ENCODE measurements at regions of chr10 and their contacts with region 1.

Region 1: GRCh38 chr10:110803830-110804338 is 67.8 kb upstream of the PDCD4 start:
- DNase-seq: no peak
- H3K4me3 ChIP-seq: no peak overlapping the region
- H3K27ac ChIP-seq: peak overlapping the region in 2 of 4 donors; percentile 69 to 73
- H3K4me1 ChIP-seq: peaks cover 25 to 30% (median 26%) of the 10 kb centered on the region in 4 donors
- H3K27me3 ChIP-seq: no peaks in the 10 kb centered on the region
- CTCF ChIP-seq: peak; percentile 64 to 70 (median 69)
- EP300 ChIP-seq: no peak
- POLR2A ChIP-seq: no peak

Region 2: DNA sequence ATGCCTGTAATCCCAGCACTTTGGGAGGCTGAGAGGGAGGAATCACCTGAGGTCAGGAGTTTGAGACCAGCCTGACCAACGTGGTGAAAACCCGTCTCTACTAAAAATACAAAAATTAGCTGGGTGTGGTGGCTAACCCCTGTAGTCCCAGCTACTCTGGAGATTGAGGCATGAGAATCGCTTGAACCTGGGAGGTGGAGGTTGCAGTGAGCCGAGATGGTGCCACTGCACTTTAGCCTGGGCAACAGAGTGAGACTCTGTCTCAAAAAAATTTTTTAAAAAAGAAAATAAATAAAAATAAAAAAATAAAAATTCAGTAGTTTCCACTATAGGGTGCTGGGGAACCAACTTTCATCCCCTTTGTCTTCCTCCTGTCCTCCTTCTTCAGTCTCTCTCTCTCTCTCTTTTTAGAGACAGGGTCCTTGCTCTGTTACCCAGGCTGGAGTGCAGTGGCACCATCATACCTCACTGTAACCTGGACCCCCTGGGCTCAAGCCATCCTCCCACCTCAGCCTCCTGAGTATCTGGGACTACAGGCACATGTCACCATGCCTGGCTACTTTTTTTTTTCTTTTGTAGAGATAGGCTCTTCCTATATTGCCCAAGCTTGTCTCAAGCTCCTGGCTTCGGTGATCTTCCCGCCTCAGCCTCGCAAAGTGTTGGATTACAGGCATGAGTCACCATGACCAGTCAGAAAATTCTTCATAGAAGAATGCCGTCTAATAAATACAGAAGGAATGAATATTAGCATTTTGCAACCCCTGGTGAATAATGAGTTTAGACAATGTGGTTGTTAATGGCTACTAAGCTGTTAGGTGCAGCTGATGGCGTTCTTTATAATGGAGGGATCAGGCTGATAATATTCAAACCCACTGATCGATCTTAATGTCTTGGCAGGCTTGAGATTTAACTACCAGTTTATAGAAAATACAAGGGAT is 139.1 kb before region 1 on chr10:
- intact Hi-C with region 1: no loop called
- DNase-seq: peak; percentile 64
- H3K4me3 ChIP-seq: no peak overlapping the region
- H3K27ac ChIP-seq: peak overlapping the region in 3 of 4 donors; percentile 36 to 65 (median 49)
- H3K4me1 ChIP-seq: peaks cover 7 to 20% (median 13%) of the 10 kb centered on the region in 4 donors
- H3K27me3 ChIP-seq: no peaks in the 10 kb centered on the region
- CTCF ChIP-seq: no peak
- EP300 ChIP-seq: no peak
- POLR2A ChIP-seq: no peak

Region 3: GRCh38 chr10:110843031-110843430 is 39.1 kb after region 1 on chr10:
- intact Hi-C with region 1: no loop called
- DNase-seq: no peak
- H3K4me3 ChIP-seq: no peak overlapping the region
- H3K27ac ChIP-seq: no peak overlapping the region
- H3K4me1 ChIP-seq: peaks cover 3 to 6% (median 5%) of the 10 kb centered on the region in 4 donors
- H3K27me3 ChIP-seq: no peaks in the 10 kb centered on the region
- CTCF ChIP-seq: no peak
- EP300 ChIP-seq: no peak
- POLR2A ChIP-seq: no peak

Region 4: GRCh38 chr10:110864662-110865140 is 60.8 kb after region 1 on chr10:
- intact Hi-C with region 1: no loop called
- DNase-seq: no peak
- H3K4me3 ChIP-seq: peak overlapping the region in 2 of 4 donors; percentile 11 to 19
- H3K27ac ChIP-seq: peak overlapping the region; percentile 47 to 73 (median 68)
- H3K4me1 ChIP-seq: peaks cover 11 to 34% (median 27%) of the 10 kb centered on the region in 4 donors
- H3K27me3 ChIP-seq: no peaks in the 10 kb centered on the region
- CTCF ChIP-seq: no peak
- EP300 ChIP-seq: no peak
- POLR2A ChIP-seq: no peak

Region 5: GRCh38 chr10:110893559-110894179 is 89.8 kb after region 1 on chr10:
- intact Hi-C with region 1: loop called (anchors 5 kb)
- DNase-seq: no peak
- H3K4me3 ChIP-seq: no peak overlapping the region
- H3K27ac ChIP-seq: peak overlapping the region in 1 of 4 donors; percentile 22
- H3K4me1 ChIP-seq: peaks cover 0 to 37% (median 31%) of the 10 kb centered on the region in 4 donors
- H3K27me3 ChIP-seq: no peaks in the 10 kb centered on the region
- CTCF ChIP-seq: peak; percentile 61 to 72 (median 70)
- EP300 ChIP-seq: no peak
- POLR2A ChIP-seq: no peak

Region 6: GRCh38 chr10:111481261-111481826 is 677.5 kb after region 1 on chr10:
- intact Hi-C with region 1: no loop called
- DNase-seq: peak; percentile 88
- H3K4me3 ChIP-seq: no peak overlapping the region
- H3K27ac ChIP-seq: no peak overlapping the region
- H3K4me1 ChIP-seq: no peaks in the 10 kb centered on the region
- H3K27me3 ChIP-seq: no peaks in the 10 kb centered on the region
- CTCF ChIP-seq: no peak
- EP300 ChIP-seq: no peak
- POLR2A ChIP-seq: no peak

Measured in esophagus muscularis mucosa (tissue), 4 donors.